Heart right ventricle (tissue), 16 donors: ENCODE measurements at regions of chr1 and their contacts with region 1.

Region 1: DNA sequence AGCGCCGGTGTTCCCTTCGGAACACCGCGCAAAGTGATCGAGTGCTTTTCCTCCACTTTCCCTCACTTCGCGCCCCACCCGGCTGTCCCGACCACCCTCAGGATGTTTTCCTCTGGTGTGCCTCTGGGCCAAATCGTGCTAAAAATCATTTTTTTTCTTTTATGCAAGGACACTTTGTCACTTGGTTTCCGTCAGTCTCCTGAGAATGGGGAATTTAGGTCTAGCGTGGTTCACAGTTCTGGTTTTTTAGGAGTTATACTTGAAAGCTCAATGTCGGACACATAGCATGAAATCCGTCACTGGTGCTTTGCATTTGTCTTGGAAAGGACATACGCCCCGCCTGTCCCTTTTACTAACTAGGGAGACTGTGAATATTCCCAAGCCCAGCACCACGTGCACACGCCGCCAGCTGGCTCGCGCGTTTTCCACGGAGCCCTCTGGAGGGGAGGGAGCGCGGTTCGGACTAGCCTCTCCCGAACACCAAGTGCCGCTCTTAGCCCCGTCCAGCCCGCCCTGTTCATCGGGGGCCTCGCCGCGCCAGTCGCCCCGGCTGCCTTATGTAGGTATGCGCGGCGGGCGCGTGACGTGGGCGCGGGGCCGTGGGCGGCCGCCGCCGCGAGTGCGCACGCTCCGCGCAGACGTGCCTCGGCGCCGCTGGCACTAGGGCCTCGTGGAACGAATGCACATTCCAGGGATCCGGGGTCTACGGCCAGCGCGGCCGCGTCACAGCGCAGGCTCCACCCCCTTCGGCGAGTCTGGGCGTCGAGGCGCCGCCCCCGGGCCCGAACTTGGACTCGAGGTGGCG is 572 bp upstream of the IRF2BP2 start:
- DNase-seq: peak; percentile 95 to 97
- ATAC-seq: peak; percentile 55 to 86 (median 80)
- H3K4me3 ChIP-seq: peak overlapping the region; percentile 27 to 70 (median 58)
- H3K27ac ChIP-seq: peak overlapping the region; percentile 95 to 100 (median 99)
- H3K4me1 ChIP-seq: peaks cover 12 to 46% (median 41%) of the 10 kb centered on the region in 9 donors
- H3K27me3 ChIP-seq: no peaks in the 10 kb centered on the region
- CTCF ChIP-seq: peak in 3 of 9 donors; percentile 2 to 12 (median 4)

Region 2: GRCh38 chr1:234533975-234534876 is 76.3 kb before region 1 on chr1:
- intact Hi-C with region 1: loop called in 3 of 10 experiments (anchors 2 to 5 kb)
- DNase-seq: peak; percentile 89 to 95
- ATAC-seq: peak in 7 of 8 donors; percentile 6 to 60 (median 30)
- H3K4me3 ChIP-seq: peak overlapping the region in 1 of 10 donors; percentile 1
- H3K27ac ChIP-seq: peak overlapping the region; percentile 94 to 99 (median 98)
- H3K4me1 ChIP-seq: peaks cover 53 to 100% (median 97%) of the 10 kb centered on the region in 9 donors
- H3K27me3 ChIP-seq: no peaks in the 10 kb centered on the region
- CTCF ChIP-seq: no peak

Region 3: GRCh38 chr1:234716908-234717375 is 106.4 kb after region 1 on chr1:
- intact Hi-C with region 1: loop called in 6 of 10 experiments (anchors 2 to 10 kb)
- DNase-seq: no peak
- ATAC-seq: no peak
- H3K4me3 ChIP-seq: no peak overlapping the region
- H3K27ac ChIP-seq: peak overlapping the region in 9 of 10 donors; percentile 28 to 100 (median 91)
- H3K4me1 ChIP-seq: peaks cover 19 to 68% (median 65%) of the 10 kb centered on the region in 9 donors
- H3K27me3 ChIP-seq: no peaks in the 10 kb centered on the region
- CTCF ChIP-seq: no peak

Region 4: GRCh38 chr1:234887016-234887900 is 276.7 kb after region 1 on chr1:
- intact Hi-C with region 1: loop called in 5 of 10 experiments (anchors 2 to 10 kb)
- DNase-seq: peak in 1 of 2 donors; percentile 70
- ATAC-seq: peak; percentile 60 to 86 (median 82)
- H3K4me3 ChIP-seq: peak overlapping the region in 1 of 10 donors; percentile 7
- H3K27ac ChIP-seq: peak overlapping the region; percentile 87 to 99 (median 94)
- H3K4me1 ChIP-seq: peaks cover 7 to 49% (median 33%) of the 10 kb centered on the region in 9 donors
- H3K27me3 ChIP-seq: no peaks in the 10 kb centered on the region
- CTCF ChIP-seq: no peak

Region 5: DNA sequence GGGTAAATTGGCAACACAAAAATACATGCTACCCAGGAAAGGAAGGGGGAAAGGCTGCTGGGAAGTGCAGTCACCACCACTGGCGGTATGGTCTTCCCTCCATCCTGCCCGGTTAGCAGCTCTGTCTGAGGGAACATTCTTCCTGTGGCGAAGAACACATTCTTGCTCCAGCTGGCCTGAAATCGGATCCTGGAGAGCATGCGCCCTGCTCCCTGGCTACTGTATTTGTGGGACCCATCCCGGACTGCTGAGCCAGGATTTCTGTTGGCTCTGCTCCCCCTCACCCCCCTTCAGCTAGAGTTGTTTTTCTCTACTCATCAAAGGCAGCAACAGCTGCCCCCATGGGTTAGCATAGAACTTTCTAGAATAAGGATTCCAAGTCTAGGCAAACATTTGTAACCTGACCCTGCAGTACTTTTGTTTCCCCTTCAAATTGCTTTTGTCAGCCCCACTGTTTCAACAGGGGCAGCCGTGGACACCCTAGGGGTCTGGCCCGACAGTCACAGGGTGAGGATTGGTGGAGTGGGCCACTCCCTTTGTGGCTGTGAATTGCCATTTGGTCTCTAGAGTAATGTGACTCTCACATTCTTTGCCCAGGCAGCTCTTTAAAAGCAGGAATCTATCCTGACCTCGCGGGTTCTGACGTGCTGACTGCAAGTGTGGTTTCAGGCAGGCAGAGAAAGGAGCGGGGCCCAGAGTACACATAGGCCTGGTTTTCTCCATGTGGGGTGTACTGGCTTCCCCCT is 360.4 kb after region 1 on chr1:
- intact Hi-C with region 1: loop called in 3 of 10 experiments (anchors 5 kb)
- DNase-seq: peak; percentile 67 to 75
- ATAC-seq: peak; percentile 64 to 83 (median 76)
- H3K4me3 ChIP-seq: peak overlapping the region in 2 of 10 donors; percentile 44 to 46
- H3K27ac ChIP-seq: peak overlapping the region; percentile 71 to 90 (median 80)
- H3K4me1 ChIP-seq: peaks cover 16 to 62% (median 36%) of the 10 kb centered on the region in 9 donors
- H3K27me3 ChIP-seq: no peaks in the 10 kb centered on the region
- CTCF ChIP-seq: no peak

Region 6: DNA sequence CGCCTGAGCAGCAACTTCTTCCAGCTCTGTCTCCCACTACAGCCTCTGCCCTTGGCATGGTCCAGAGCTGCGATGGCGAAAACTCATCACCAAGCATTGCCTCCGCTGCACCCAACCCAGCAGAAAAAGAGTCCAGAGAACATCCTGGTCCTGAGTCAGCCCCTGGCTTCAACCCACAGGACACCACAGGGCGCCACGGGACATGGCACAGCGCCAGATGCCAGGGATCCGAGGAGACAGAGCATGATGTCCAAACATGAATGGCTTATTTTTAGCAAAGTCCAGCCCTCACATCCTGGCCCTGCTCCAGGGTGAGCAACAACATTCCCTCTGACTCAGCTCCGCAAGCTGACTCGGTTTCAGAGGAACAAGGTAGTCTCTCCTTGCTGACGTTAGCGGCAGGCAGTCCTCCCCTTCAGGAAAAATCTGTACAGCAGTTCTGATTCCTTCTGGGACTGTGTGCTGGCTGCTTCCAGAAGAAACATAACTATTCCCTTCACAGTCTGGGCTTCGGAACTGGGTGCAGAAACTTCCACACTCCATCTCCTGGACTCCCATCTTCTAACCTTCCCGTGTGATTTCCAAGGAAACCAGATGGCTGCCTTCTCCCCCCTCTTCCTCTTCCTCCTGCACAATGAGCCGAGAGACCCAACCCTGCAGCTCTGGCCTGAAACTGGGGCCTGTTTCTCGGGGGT is 386.8 kb after region 1 on chr1:
- intact Hi-C with region 1: loop called in 3 of 10 experiments (anchors 2 to 5 kb)
- DNase-seq: peak; percentile 97
- ATAC-seq: peak; percentile 91 to 98 (median 96)
- H3K4me3 ChIP-seq: peak overlapping the region in 5 of 10 donors; percentile 6 to 13 (median 12)
- H3K27ac ChIP-seq: peak overlapping the region; percentile 87 to 95 (median 92)
- H3K4me1 ChIP-seq: peaks cover 21 to 35% (median 30%) of the 10 kb centered on the region in 9 donors
- H3K27me3 ChIP-seq: no peaks in the 10 kb centered on the region
- CTCF ChIP-seq: no peak

Region 7: GRCh38 chr1:235018161-235018560 is 407.6 kb after region 1 on chr1:
- intact Hi-C with region 1: no loop called
- DNase-seq: no peak
- ATAC-seq: no peak
- H3K4me3 ChIP-seq: no peak overlapping the region
- H3K27ac ChIP-seq: peak overlapping the region in 1 of 10 donors; percentile 49
- H3K4me1 ChIP-seq: peaks cover 0 to 27% (median 5%) of the 10 kb centered on the region in 9 donors
- H3K27me3 ChIP-seq: no peaks in the 10 kb centered on the region
- CTCF ChIP-seq: no peak